CD8-positive, alpha-beta T cell (primary cell): ENCODE measurements at regions of chr3 and their contacts with region 1.

Region 1: GRCh38 chr3:171328419-171329082 is 131.7 kb downstream of the TNIK start:
- DNase-seq: peak; percentile 22 to 81 (median 54)
- ATAC-seq: peak; percentile 97
- H3K4me3 ChIP-seq: no peak overlapping the region
- H3K4me3 Mint-ChIP-seq: no peak overlapping the region
- H3K27ac ChIP-seq: no peak overlapping the region
- H3K27ac Mint-ChIP-seq: peak overlapping the region; percentile 1
- H3K4me1 ChIP-seq: peaks cover 31% of the 10 kb centered on the region
- H3K4me1 Mint-ChIP-seq: peaks cover 65% of the 10 kb centered on the region
- H3K27me3 ChIP-seq: no peaks in the 10 kb centered on the region
- H3K27me3 Mint-ChIP-seq: no peaks in the 10 kb centered on the region
- CTCF ChIP-seq: peak; percentile 38

Region 2: DNA sequence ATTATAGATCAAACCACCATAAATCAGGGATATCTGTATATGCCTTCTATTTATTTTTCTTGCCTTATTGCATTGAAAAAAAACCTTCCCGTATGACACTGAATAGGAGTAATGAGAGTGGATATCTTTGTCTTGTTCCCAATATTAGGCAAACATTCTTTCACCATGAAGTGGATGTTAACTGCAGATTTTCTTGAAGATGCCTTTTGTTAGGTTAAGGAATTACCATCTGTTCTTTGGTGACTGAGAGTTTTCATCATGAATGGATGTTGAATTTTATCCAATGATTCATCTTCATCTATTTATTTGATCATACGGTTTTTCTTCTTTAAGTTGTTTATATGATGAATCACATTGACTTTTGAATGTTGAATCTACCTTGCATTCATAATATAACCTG is 1617.9 kb before region 1 on chr3:
- CTCF ChIA-PET with region 1: no interaction called
- POLR2A ChIA-PET with region 1: no interaction called
- intact Hi-C with region 1: no loop called
- DNase-seq: no peak
- ATAC-seq: no peak
- H3K4me3 ChIP-seq: no peak overlapping the region
- H3K4me3 Mint-ChIP-seq: no peak overlapping the region
- H3K27ac ChIP-seq: no peak overlapping the region
- H3K27ac Mint-ChIP-seq: no peak overlapping the region
- H3K4me1 ChIP-seq: no peaks in the 10 kb centered on the region
- H3K4me1 Mint-ChIP-seq: no peaks in the 10 kb centered on the region
- H3K27me3 ChIP-seq: peaks cover 0 to 2% of the 10 kb centered on the region in 2 experiments
- H3K27me3 Mint-ChIP-seq: no peaks in the 10 kb centered on the region
- CTCF ChIP-seq: no peak

Region 3: GRCh38 chr3:171162986-171163723 is 165.4 kb before region 1 on chr3:
- CTCF ChIA-PET with region 1: interaction called, 4 read pairs
- POLR2A ChIA-PET with region 1: no interaction called
- intact Hi-C with region 1: loop called in 1 of 2 experiments (anchors 2 kb)
- DNase-seq: peak in 3 of 9 experiments; percentile 9 to 58 (median 42)
- ATAC-seq: peak; percentile 34
- H3K4me3 ChIP-seq: no peak overlapping the region
- H3K4me3 Mint-ChIP-seq: no peak overlapping the region
- H3K27ac ChIP-seq: no peak overlapping the region
- H3K27ac Mint-ChIP-seq: no peak overlapping the region
- H3K4me1 ChIP-seq: no peaks in the 10 kb centered on the region
- H3K4me1 Mint-ChIP-seq: peaks cover 18% of the 10 kb centered on the region
- H3K27me3 ChIP-seq: no peaks in the 10 kb centered on the region
- H3K27me3 Mint-ChIP-seq: no peaks in the 10 kb centered on the region
- CTCF ChIP-seq: peak; percentile 77

Region 4: DNA sequence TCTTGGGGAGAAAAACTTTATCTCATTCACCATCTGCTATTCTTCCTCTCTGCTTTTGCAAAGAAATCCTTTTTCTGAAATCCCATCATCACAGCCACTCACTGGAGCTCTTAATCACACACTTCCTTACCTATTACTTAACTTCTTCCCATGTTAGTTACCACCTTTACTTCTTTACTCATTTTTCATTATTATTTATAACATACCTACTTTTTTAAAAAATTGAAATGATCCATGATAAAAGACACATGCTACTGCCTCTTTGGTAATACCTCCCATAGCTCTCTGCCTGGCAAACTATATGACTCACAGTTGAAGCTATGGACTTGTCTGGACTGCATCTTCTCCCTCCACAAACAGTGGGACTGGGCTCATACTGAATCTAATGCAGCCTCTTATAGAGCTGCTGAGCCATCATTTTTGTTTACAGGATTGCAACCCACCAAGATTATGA is 18.6 kb before region 1 on chr3:
- CTCF ChIA-PET with region 1: interaction called, 11 read pairs
- POLR2A ChIA-PET with region 1: interaction called, 3 read pairs
- intact Hi-C with region 1: no loop called
- DNase-seq: no peak
- ATAC-seq: no peak
- H3K4me3 ChIP-seq: no peak overlapping the region
- H3K4me3 Mint-ChIP-seq: no peak overlapping the region
- H3K27ac ChIP-seq: no peak overlapping the region
- H3K27ac Mint-ChIP-seq: peak overlapping the region; percentile 34
- H3K4me1 ChIP-seq: peaks cover 12% of the 10 kb centered on the region
- H3K4me1 Mint-ChIP-seq: peaks cover 82% of the 10 kb centered on the region
- H3K27me3 ChIP-seq: no peaks in the 10 kb centered on the region
- H3K27me3 Mint-ChIP-seq: no peaks in the 10 kb centered on the region
- CTCF ChIP-seq: no peak